Posterior vena cava (tissue), 2 donors: ENCODE measurements at regions of chr1 and their contacts with region 1.

Region 1: DNA sequence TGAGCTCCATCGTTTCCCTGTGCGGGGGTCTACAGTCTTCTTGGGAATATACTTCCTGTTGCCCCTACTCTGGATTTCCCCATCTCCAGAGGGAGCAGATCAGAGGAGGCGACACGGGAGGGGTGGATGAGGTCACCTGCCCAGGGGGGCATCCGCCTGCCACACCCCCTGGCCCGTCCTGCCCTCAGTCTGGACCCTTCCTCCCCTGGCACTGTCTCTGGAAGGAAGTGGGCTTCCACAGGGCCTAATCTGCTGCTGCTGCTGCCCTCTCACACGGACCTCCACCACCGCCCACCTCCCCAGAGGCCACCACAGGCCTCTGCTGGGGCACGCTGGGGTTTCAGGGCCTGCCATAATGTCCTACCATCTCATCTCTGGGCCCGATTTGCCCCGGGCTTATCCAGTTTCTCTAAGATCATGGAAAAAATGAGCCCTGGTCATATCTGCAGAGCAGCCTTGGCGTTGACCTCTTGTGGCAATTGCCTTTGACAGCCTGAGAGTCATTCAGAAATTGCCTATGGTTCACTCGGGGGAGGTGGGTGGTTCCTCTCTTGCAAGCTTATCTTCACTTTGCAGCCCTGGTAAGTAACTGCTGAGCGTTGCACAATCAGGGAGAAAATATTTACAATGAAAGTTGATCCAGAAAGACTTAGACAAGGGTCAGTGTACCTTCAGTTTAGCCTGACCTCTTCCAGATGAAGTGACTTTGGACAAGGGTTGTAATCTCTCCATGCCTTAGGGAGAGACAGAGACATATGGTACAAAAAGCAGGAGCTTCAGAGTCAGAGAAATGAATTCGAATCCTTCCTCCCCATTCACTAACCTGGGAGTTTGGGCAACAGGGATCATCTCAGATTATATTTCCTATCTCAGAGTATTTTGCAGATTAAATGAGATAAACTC is 252.4 kb downstream of the TOMM20 start:
- DNase-seq: no peak

Region 2: GRCh38 chr1:234938924-234939323 is 62.7 kb after region 1 on chr1:
- intact Hi-C with region 1: loop called in 1 of 2 experiments (anchors 1 kb)
- DNase-seq: no peak